Right lobe of liver (tissue), 6 donors: ENCODE measurements at regions of chr10 and their contacts with region 1.

Region 1: GRCh38 chr10:128011175-128011979 is 104.5 kb downstream of the PTPRE start:
- DNase-seq: peak; percentile 84 to 88 (median 85)
- ATAC-seq: peak; percentile 93 to 98 (median 98)
- H3K4me3 ChIP-seq: no peak overlapping the region
- H3K27ac ChIP-seq: no peak overlapping the region
- H3K4me1 ChIP-seq: peaks cover 0 to 6% (median 0%) of the 10 kb centered on the region in 4 donors
- H3K27me3 ChIP-seq: no peaks in the 10 kb centered on the region
- CTCF ChIP-seq: peak; percentile 98 to 99 (median 99)
- POLR2A ChIP-seq: no peak

Region 2: GRCh38 chr10:127813290-127813689 is 198.1 kb before region 1 on chr10:
- intact Hi-C with region 1: no loop called
- DNase-seq: no peak
- ATAC-seq: no peak
- H3K4me3 ChIP-seq: no peak overlapping the region
- H3K27ac ChIP-seq: no peak overlapping the region
- H3K4me1 ChIP-seq: no peaks in the 10 kb centered on the region
- H3K27me3 ChIP-seq: no peaks in the 10 kb centered on the region
- CTCF ChIP-seq: peak in 3 of 4 donors; percentile 22 to 28 (median 23)
- POLR2A ChIP-seq: no peak

Region 3: DNA sequence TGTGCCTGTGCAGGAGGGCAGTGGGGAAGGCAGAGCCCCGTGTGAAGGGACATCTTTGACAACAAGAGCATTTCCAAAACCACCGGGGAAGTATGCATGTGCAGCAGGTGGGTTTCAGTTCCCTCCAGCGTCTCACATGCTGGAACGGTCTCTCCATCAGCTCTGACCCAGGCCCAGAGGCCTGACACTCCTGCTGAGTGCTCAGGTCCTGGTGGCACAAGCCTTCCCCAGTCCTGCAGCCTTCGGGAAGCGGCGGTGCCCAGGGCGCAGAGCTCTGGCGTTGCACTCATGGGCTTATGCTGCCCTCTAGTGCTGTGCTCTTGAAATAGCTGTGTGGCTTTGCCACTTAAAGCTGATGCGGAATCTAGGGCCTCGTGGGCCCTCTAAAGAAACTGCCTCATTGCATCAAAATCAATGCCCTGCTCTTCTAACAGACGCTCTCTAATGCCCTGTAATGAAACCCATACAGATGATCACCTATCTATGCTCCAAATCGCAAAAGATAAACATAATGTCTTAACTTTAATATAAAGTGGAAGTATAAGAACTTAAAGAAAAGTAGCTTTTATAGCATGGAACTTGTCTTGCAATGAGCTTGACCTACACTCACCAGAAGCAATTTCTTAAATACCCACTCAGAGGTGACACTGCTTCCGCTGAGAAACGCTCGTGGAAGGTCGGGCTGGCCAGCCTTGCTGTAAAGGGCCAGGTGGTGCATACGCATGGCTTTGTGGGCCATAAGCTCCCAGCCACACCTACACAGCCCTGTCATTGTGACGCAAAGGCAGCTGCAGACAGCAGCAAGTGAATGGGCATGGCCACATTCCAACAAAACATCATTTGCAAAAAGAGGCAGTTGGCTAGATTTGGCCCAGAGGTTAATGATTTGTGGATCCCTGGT is 157.3 kb before region 1 on chr10:
- intact Hi-C with region 1: no loop called
- DNase-seq: peak; percentile 70 to 76 (median 75)
- ATAC-seq: peak; percentile 94 to 98 (median 96)
- H3K4me3 ChIP-seq: no peak overlapping the region
- H3K27ac ChIP-seq: no peak overlapping the region
- H3K4me1 ChIP-seq: no peaks in the 10 kb centered on the region
- H3K27me3 ChIP-seq: no peaks in the 10 kb centered on the region
- CTCF ChIP-seq: peak; percentile 74 to 86 (median 82)
- POLR2A ChIP-seq: no peak

Region 4: DNA sequence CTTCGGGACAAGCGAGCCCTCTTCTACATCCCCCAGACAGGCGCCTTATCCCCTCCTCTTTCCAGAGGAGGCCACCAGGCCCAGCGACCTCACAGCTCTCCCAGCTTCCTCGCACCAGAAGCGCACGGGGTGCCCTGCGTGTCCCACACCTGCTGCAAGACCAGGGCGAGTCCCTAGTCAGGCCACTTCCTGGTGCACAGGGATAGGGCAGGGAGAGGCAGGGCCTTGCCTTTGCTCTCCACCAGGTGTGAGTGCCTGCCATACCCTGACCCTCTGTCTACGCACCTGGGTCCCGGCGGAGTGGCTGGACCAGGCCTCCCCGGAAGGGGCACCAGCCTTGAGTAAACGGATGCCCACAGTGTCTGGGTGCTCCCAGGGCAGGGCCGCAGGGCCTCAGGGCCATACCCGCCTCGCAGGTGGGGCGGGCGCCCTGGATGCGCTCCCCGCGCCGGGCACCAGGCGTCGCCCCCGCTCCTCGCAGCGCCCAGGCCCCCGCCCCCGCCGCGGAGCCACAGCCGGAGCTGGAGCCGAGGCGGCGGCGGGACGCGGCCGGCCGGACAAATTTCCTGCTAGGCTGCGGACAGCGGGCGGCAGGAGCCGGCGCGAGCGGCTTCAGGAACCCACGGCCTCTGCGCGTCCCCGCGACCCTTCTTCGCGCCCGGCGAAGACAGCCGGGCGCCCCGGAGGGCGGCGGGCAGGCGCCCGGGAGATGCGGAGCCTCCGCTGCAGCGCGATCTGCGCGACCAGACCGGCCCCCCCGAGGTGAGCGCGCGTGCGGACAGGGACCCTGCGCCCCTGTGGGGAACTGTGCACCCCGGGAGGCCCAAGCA is 104.6 kb before region 1 on chr10 and contains the start of gene PTPRE:
- intact Hi-C with region 1: loop called (anchors 5 to 10 kb)
- DNase-seq: peak; percentile 78 to 85 (median 82)
- ATAC-seq: peak; percentile 95 to 98 (median 98)
- H3K4me3 ChIP-seq: peak within 1 kb of the TSS; percentile 49 to 63 (median 58)
- H3K27ac ChIP-seq: peak within 1 kb of the TSS in 2 of 3 donors; percentile 37 to 67
- H3K4me1 ChIP-seq: peaks cover 0 to 8% (median 0%) of the 10 kb centered on the region in 4 donors
- H3K27me3 ChIP-seq: no peaks in the 10 kb centered on the region
- CTCF ChIP-seq: peak; percentile 56 to 91 (median 74)
- POLR2A ChIP-seq: no peak
- total RNA-seq, gene PTPRE: 2.3 to 9.2 (median 2.7) TPM

Region 5: GRCh38 chr10:127935071-127935561 is 76.3 kb before region 1 on chr10:
- intact Hi-C with region 1: no loop called
- DNase-seq: no peak
- ATAC-seq: peak in 1 of 4 donors; percentile 23
- H3K4me3 ChIP-seq: no peak overlapping the region
- H3K27ac ChIP-seq: no peak overlapping the region
- H3K4me1 ChIP-seq: no peaks in the 10 kb centered on the region
- H3K27me3 ChIP-seq: no peaks in the 10 kb centered on the region
- CTCF ChIP-seq: no peak
- POLR2A ChIP-seq: no peak

Region 6: GRCh38 chr10:128310971-128311658 is 299.7 kb after region 1 on chr10:
- intact Hi-C with region 1: no loop called
- DNase-seq: no peak
- ATAC-seq: no peak
- H3K4me3 ChIP-seq: no peak overlapping the region
- H3K27ac ChIP-seq: no peak overlapping the region
- H3K4me1 ChIP-seq: no peaks in the 10 kb centered on the region
- H3K27me3 ChIP-seq: no peaks in the 10 kb centered on the region
- CTCF ChIP-seq: no peak
- POLR2A ChIP-seq: no peak